PC-9 (cell line): ENCODE measurements at regions of chr3 and their contacts with region 1.

Region 1: GRCh38 chr3:51941798-51942602 is at the starts of genes PARP3 and RRP9:
- DNase-seq: peak; percentile 98 to 99
- H3K4me3 ChIP-seq: peak within 1 kb of the TSS; percentile 85
- H3K27ac ChIP-seq: peak within 1 kb of the TSS; percentile 68
- H3K4me1 ChIP-seq: peaks cover 16% of the 10 kb centered on the region; the same call in 1 of the 2 replicates
- H3K27me3 ChIP-seq: no peaks in the 10 kb centered on the region
- CTCF ChIP-seq: peak; percentile 94
- total RNA-seq, gene PARP3: 24.4 and 33.8 TPM in 2 replicates
- total RNA-seq, gene RRP9: 23.4 and 23.9 TPM in 2 replicates

Region 2: GRCh38 chr3:51967384-51968169 is 25.6 kb after region 1 on chr3 and contains the start of gene PCBP4:
- CTCF ChIA-PET with region 1: no interaction called
- POLR2A ChIA-PET with region 1: no interaction called
- intact Hi-C with region 1: no loop called
- DNase-seq: peak in 1 of 2 experiments; percentile 62
- H3K4me3 ChIP-seq: peak within 1 kb of the TSS; percentile 57; the same call in 1 of the 2 replicates
- H3K27ac ChIP-seq: no peak within 1 kb of the TSS
- H3K4me1 ChIP-seq: peaks cover 4% of the 10 kb centered on the region; the same call in 1 of the 2 replicates
- H3K27me3 ChIP-seq: no peaks in the 10 kb centered on the region
- CTCF ChIP-seq: no peak
- total RNA-seq, gene PCBP4: 14.7 and 17.9 TPM in 2 replicates

Region 3: DNA sequence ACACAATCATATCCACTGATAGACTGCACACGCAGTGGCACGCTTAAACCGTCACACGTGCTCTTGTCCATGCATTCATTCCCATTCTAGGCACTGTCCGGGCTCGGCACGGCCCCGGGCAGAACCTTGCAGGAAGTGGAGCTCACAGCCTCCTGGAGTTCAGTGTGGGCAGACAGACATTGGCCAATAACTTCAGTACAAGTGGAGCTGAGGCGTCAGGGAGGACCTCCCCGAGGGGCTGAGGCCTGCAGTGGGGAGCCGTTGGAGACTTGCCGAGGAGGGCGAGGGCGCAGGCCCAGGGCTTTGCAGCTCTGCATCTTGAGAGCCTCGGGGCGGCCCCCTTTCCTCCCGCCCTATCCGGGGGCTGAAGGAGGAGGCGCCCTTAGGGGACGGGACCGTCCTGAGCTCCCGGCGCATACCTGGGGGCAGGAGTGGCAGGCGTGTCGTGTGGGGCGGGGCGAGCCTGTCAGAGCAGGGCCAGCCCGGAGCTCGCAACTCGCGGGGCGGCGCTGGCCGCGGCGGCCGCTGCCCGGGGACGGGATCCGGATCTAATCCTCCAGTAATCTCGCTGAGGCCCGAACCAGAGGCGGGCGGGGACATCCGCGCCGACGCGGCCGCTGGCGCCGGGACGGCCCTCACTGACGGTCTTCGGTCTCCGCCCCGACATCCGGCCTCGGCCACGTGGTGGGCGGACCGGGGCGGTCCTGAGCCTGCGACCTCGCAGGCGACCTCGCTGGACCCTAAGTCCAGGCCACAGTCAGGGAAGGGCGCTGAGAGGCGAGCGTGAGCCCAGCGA is 41.0 kb after region 1 on chr3 and contains the start of gene ACY1:
- CTCF ChIA-PET with region 1: no interaction called
- POLR2A ChIA-PET with region 1: interaction called, 3 read pairs
- intact Hi-C with region 1: loop called (anchors 2 kb)
- DNase-seq: peak; percentile 82 to 95
- H3K4me3 ChIP-seq: peak within 1 kb of the TSS; percentile 67
- H3K27ac ChIP-seq: peak within 1 kb of the TSS; percentile 89
- H3K4me1 ChIP-seq: peaks cover 29% of the 10 kb centered on the region
- H3K27me3 ChIP-seq: no peaks in the 10 kb centered on the region
- CTCF ChIP-seq: peak; percentile 53
- total RNA-seq, gene ACY1: 52.2 and 63.3 TPM in 2 replicates

Region 4: DNA sequence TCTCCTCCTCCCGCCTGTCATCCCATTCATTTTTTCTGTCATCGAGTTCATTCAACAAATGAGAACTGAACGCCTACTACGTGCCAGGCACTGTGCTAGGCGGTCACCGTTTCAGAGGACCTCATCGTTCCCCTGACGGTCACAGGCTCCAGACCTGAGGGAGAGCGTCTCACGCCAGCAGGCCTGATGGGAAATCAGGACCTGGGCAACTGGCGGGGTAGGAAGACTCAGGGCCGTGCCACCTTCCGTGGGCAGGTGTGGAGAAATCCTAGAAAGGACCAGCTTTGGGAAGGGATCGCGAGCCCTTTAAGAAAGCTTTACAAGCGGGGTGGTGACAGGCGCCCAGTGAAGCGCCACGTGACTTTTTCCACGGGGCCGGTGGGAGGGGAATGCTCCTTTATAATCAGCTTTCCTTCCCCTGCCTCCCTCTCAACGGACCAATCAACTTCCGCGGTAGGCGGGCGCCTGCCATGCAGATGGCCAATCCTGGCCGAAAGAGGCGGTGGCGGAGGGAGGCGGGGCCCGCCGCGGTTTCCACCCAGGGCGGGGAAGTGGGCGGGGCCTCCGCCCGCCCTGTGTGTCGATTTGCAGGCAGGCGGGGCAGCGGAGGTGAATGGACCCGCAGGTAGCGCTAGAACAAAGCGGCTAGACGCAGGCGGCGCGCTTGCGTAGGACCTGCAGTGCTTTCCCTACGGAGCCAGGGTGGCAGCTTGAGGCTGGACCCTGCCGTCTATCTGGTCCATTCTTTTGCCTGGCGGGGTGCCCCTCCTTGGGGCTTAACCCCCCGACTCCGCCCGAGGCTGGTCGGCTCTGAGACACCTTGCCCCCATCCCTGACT is 115.2 kb after region 1 on chr3:
- CTCF ChIA-PET with region 1: interaction called, 3 read pairs
- POLR2A ChIA-PET with region 1: no interaction called
- intact Hi-C with region 1: loop called (anchors 2 kb)
- DNase-seq: peak; percentile 93 to 98
- H3K4me3 ChIP-seq: peak overlapping the region; percentile 72
- H3K27ac ChIP-seq: no peak overlapping the region
- H3K4me1 ChIP-seq: peaks cover 6% of the 10 kb centered on the region; the same call in 1 of the 2 replicates
- H3K27me3 ChIP-seq: no peaks in the 10 kb centered on the region
- CTCF ChIP-seq: no peak

Region 5: GRCh38 chr3:52144034-52144795 is 202.2 kb after region 1 on chr3:
- CTCF ChIA-PET with region 1: no interaction called
- POLR2A ChIA-PET with region 1: no interaction called
- intact Hi-C with region 1: loop called (anchors 1 kb)
- DNase-seq: peak in 1 of 2 experiments; percentile 73
- H3K4me3 ChIP-seq: no peak overlapping the region
- H3K27ac ChIP-seq: no peak overlapping the region
- H3K4me1 ChIP-seq: no peaks in the 10 kb centered on the region
- H3K27me3 ChIP-seq: no peaks in the 10 kb centered on the region
- CTCF ChIP-seq: peak; percentile 93

Region 6: DNA sequence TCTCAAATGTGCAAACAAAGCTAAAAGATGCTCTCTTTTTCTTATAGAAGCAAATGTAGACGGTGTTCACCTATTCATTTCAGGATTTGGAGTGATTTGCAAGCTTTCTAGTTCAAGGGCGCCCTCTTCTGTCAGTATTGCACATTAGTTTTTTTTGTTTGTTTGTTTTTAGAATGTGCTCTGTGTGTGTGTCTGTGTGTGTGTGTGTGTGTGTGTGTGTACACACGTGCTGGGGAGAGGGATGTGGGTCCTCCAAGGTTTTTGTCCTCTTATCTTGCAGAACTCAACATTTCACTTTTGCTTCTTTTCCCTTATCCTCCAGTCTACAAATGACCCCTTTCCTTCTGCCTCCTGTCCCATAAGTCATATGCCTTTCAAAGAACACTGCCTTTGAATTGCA is 397.6 kb after region 1 on chr3:
- CTCF ChIA-PET with region 1: no interaction called
- POLR2A ChIA-PET with region 1: interaction called, 8 read pairs
- intact Hi-C with region 1: loop called (anchors 5 kb)
- DNase-seq: peak; percentile 22 to 68
- H3K4me3 ChIP-seq: no peak overlapping the region
- H3K27ac ChIP-seq: no peak overlapping the region
- H3K4me1 ChIP-seq: no peaks in the 10 kb centered on the region
- H3K27me3 ChIP-seq: no peaks in the 10 kb centered on the region
- CTCF ChIP-seq: peak; percentile 78